Panc1 (cell line): ENCODE measurements at regions of chr4 and their contacts with region 1.

Region 1: DNA sequence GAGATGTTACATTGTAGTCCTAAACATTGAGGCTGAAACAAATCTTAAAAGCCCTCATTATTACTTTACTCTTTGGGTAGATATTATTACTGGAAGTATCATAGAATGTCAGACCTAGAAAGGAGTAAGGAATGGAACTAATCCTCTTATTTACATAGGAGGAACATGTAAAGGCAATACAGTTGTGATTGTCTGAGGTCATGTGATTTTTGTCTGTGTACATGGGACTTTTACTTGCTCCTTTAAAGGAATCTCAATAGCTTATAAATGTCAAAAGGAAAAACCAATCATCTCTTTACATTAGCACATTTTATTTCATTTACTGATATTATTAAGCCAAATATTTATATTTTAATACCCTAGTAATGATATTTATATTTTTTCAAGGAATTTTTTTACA is 568.2 kb downstream of the CCSER1 start:
- DNase-seq: no peak
- ATAC-seq: no peak
- H3K4me3 ChIP-seq: no peak overlapping the region
- H3K27ac ChIP-seq: no peak overlapping the region
- H3K4me1 ChIP-seq: no peaks in the 10 kb centered on the region
- H3K27me3 ChIP-seq: no peaks in the 10 kb centered on the region
- CTCF ChIP-seq: no peak

Region 2: DNA sequence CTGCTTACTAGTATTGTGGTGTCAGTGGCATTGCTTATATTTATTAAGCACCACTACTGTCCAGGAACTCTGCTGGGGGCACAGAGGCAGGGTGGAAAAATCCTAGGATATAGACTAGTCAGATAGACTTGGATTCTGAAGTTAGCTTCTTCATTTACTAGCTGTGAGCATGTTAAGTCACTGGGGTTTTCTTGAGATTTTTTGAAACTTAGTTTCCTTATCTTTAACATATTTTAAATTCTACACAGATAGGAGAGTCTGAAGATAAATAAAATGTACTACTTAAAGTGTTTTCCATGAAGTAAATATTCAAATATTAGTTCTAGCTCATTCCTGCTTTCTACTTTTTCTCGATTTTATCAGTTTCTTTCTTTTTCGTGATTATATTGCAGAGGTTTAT is 1411.4 kb after region 1 on chr4:
- CTCF ChIA-PET with region 1: no interaction called
- POLR2A ChIA-PET with region 1: interaction called, 11 read pairs
- in situ Hi-C with region 1: no loop called
- intact Hi-C with region 1: no loop called
- DNase-seq: no peak
- ATAC-seq: no peak
- H3K4me3 ChIP-seq: no peak overlapping the region
- H3K27ac ChIP-seq: no peak overlapping the region
- H3K4me1 ChIP-seq: no peaks in the 10 kb centered on the region
- H3K27me3 ChIP-seq: no peaks in the 10 kb centered on the region
- CTCF ChIP-seq: no peak